ENCODE measurements at regions of chr17 and their contacts with region 1.

Region 1: DNA sequence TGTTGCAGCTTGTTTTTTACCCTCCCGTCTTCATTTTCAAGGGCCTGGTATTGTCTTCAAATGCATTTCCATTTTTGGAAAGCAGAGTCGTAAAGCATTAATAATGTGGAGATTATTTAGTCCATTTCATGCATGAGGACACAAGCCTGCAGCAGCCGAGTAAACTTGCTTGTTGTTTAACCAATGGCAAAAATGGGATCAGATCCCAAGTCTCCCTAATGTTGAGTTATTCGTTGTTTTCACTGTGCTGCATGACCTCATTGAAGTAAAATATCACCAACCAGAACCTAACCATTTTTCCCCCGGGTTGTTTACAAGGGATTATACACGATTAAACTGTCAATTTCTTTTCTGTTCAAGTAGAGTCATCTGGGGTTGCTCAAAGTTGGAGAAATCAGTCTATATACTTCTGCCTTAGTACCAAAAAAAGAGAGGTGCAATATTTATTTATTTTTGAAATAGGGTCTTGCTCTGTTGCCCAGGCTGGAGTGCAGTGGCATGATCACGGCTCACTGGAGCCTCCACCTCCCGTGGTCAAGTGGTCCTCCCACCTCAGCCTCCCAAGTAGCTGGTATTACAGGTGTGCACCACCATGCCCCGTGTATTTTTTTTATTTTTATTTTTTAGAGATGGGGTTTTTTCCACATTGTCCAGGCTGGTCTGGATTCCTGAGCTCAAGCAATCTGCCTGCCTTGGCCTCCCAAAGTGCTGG is 12.4 kb downstream of the AMZ2 start:
- H3K4me3 ChIP-seq: no peak overlapping the region
- H3K27ac ChIP-seq: no peak overlapping the region
- H3K4me1 ChIP-seq: no peaks in the 10 kb centered on the region
- CTCF ChIP-seq: no peak

Region 2: GRCh38 chr17:68228817-68229572 is 31.2 kb before region 1 on chr17:
- CTCF ChIA-PET with region 1: no interaction called
- POLR2A ChIA-PET with region 1: no interaction called
- H3K4me3 ChIP-seq: no peak overlapping the region
- H3K27ac ChIP-seq: no peak overlapping the region
- H3K4me1 ChIP-seq: no peaks in the 10 kb centered on the region
- CTCF ChIP-seq: no peak

Region 3: DNA sequence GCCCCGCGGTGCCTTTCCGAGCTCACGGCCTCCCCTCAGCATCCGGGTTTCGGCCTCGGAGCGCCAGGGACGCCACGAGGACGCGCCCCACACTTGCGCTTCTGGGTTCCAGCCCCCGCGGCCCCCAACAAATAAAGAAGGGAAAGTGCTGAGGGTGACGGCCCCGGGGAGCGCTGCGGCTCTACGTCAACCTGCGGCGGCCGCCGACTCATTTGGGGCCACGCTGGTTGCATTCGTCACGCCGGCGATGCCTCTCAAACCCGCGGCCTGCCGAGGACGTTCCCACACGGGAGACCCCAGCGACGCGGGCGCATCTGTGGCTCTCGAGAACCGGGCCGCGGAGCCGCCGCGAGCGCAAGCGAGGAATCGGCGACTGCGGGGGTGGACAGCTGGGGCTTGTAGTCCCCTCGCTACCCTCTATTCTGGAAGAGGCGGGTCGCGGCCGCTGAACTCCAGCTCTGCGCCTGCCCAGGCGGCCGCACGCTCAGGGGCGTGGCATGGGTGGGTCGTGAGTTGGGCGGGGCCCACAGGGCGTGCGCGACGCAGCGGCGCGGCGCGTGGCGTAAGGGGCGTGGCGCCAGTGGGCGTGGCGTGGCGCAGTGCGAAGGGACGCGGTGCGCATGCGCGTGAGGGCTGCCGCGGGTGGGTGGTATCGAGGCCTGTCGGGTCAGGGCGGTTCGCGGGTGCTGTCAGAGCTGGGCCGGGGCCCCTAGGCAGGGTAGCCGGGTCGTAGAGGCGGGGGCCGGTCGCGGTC is 12.6 kb before region 1 on chr17 and contains the start of gene AMZ2:
- CTCF ChIA-PET with region 1: interaction called, 23 read pairs
- POLR2A ChIA-PET with region 1: interaction called, 6 read pairs
- H3K4me3 ChIP-seq: peak within 1 kb of the TSS; percentile 98
- H3K27ac ChIP-seq: peak within 1 kb of the TSS; percentile 89
- H3K4me1 ChIP-seq: peaks cover 5% of the 10 kb centered on the region
- CTCF ChIP-seq: peak; percentile 36; the same call in 1 of the 2 replicates

Region 4: DNA sequence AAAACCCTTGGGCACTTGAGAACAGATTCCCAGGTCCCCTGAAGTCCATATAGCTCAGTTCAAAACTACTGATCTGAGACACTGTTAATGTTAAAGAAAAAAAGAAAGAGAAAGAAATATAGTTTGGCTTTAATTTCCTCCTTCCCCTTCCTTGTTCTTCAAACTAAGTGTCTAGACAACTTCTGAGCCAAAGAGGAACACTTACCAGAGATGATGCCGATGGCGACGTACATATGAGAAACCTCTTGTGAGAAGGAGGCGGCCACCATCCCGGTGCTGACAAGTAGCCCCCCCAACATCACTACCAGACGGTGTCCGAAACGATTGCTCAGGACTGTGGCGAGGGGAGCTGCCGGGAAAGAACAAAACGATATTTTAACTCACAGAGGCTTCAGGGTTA is 13.5 kb after region 1 on chr17:
- CTCF ChIA-PET with region 1: interaction called, 10 read pairs
- POLR2A ChIA-PET with region 1: no interaction called
- H3K4me3 ChIP-seq: no peak overlapping the region
- H3K27ac ChIP-seq: no peak overlapping the region
- H3K4me1 ChIP-seq: no peaks in the 10 kb centered on the region
- CTCF ChIP-seq: no peak

Region 5: DNA sequence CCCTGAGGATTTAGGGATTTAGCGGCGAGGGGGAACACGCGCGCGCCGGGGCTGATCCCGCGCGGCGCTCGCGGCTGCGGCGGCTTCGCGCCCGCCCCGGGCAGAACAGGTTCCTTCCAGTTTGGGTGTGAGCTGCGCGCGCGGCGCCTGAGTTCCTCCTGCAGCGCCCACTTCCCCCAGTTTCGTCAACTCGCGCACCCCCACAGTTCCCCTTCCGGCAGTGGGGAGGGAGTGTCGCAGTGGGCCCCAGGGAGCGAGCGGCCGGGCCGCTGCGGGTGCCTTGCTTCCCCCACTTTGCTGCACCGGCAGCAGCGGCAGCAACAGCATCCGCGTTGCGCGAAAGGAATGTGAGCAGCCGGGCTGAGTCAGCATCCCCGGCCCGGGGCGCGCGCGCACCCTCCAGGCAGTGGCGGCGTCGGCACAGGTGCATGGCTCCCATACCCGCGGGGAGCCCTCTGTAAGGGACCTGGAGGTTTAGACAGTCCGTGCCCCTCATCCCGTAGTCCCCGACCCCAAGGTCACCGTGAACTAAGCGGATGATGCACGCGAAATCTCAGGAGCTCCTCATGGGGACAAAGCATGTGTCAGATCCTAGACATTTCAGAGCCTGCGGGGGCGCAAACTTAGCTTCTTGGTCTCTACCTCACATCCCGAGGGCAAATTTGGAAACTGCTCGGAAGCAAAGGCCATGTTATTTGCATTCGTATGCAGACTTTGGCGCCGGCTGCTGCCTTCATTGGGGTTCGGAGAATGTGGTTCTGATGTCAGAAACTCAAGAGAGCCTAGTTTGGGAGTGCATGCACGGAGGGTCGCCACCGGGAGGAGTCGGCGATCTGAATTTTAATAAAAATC is 31.9 kb after region 1 on chr17:
- CTCF ChIA-PET with region 1: interaction called, 11 read pairs
- POLR2A ChIA-PET with region 1: no interaction called
- H3K4me3 ChIP-seq: peak overlapping the region; percentile 55
- H3K27ac ChIP-seq: peak overlapping the region; percentile 74; the same call in 1 of the 2 replicates
- H3K4me1 ChIP-seq: peaks cover 7% of the 10 kb centered on the region; the same call in 1 of the 2 replicates
- CTCF ChIP-seq: peak; percentile 71

Region 6: DNA sequence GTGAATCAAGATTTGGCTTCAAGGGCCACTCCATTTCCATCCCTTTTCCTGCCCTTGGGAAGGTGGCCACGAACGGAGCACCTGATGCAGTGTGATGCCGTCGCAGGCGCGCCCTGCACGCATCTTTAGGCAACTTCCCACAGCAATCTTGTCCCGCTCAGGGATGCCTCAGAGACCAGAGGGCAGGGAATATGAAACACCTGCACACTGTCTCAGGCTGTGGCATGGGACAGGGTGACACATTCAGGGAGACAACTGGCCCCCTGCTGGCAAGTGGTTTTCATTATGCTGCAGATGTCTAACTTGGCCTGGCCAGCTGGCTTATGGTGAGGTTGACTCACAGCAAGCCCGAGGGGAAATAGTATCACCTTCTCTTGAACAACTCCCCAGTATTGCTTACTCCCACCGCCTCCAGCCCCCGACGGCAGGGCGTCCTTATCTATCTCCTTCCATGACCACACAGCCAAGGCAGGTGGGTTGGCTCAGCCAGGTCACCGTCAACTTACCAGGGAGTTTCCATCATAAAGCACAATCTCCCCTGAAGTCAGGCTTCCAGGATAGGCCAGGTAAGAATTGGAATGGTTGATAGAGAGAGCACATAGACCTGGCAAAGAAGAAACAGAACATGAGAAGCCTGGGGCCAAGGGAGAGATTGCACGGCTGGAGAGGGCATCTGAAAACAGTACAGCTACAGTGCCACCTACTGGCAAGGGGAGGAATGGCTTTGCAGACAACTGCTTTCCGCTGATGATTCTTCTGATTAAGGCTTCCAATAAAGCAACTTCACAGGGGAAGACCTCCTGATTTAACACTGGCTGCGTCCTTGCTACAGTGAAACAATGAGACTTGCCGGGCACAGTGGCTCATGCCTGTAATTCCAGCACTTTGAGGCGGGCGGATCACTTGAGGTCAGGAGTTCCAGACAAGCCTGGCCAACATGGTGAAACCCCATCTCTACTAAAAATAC is 176.0 kb after region 1 on chr17:
- CTCF ChIA-PET with region 1: interaction called, 67 read pairs
- POLR2A ChIA-PET with region 1: no interaction called
- H3K4me3 ChIP-seq: no peak overlapping the region
- H3K27ac ChIP-seq: no peak overlapping the region
- H3K4me1 ChIP-seq: peaks cover 6% of the 10 kb centered on the region
- CTCF ChIP-seq: peak; percentile 79